ENCODE measurements at regions of chr5 and their contacts with region 1.

Region 1: GRCh38 chr5:65481635-65482295 is at the start of gene ADAMTS6:
- DNase-seq: peak; percentile 92
- ATAC-seq: peak; percentile 94
- H3K4me3 Mint-ChIP-seq: no peak within 1 kb of the TSS
- H3K27ac Mint-ChIP-seq: peak within 1 kb of the TSS; percentile 85
- H3K4me1 Mint-ChIP-seq: peaks cover 7% of the 10 kb centered on the region
- H3K27me3 Mint-ChIP-seq: no peaks in the 10 kb centered on the region
- CTCF ChIP-seq: no peak
- total RNA-seq, gene ADAMTS6: 1.1 to 1.9 TPM

Region 2: GRCh38 chr5:64634997-64635686 is 846.6 kb before region 1 on chr5:
- CTCF ChIA-PET with region 1: interaction called, 14 read pairs
- POLR2A ChIA-PET with region 1: no interaction called
- intact Hi-C with region 1: loop called (anchors 10 kb)
- DNase-seq: no peak
- ATAC-seq: peak; percentile 45
- H3K4me3 Mint-ChIP-seq: no peak overlapping the region
- H3K27ac Mint-ChIP-seq: no peak overlapping the region
- H3K4me1 Mint-ChIP-seq: peaks cover 2% of the 10 kb centered on the region
- H3K27me3 Mint-ChIP-seq: peaks cover 20% of the 10 kb centered on the region
- CTCF ChIP-seq: peak; percentile 91

Region 3: DNA sequence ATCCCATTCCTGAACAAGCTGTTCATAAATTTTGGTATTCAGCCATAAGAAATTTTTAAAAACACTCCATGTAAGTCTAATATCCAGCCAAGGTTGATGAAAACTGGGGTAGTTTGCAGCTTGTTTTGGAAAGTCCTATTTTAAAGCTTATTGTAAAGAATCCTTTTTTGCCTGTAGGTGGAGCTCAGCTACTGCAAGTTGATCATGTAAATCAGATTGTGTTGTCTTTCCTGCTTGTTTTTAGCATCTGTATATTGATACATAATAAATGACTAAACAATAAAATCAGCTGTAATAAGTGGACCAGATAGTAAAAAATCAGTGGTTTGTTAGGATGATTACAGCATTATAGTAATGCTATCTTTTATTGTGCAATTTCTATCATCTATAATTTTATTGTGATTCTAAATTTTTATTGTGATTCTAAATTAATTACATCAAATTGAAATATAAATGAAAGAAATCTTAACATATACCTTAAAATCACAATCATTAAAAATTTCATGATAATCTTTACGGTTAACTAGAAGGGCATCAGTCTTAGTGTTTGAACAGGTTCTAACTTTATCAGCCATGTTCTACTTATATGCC is 670.6 kb before region 1 on chr5:
- CTCF ChIA-PET with region 1: interaction called, 45 read pairs
- POLR2A ChIA-PET with region 1: no interaction called
- intact Hi-C with region 1: loop called (anchors 1 kb)
- DNase-seq: peak; percentile 18
- ATAC-seq: peak; percentile 37
- H3K4me3 Mint-ChIP-seq: no peak overlapping the region
- H3K27ac Mint-ChIP-seq: no peak overlapping the region
- H3K4me1 Mint-ChIP-seq: peaks cover 5% of the 10 kb centered on the region
- H3K27me3 Mint-ChIP-seq: no peaks in the 10 kb centered on the region
- CTCF ChIP-seq: peak; percentile 69

Region 4: DNA sequence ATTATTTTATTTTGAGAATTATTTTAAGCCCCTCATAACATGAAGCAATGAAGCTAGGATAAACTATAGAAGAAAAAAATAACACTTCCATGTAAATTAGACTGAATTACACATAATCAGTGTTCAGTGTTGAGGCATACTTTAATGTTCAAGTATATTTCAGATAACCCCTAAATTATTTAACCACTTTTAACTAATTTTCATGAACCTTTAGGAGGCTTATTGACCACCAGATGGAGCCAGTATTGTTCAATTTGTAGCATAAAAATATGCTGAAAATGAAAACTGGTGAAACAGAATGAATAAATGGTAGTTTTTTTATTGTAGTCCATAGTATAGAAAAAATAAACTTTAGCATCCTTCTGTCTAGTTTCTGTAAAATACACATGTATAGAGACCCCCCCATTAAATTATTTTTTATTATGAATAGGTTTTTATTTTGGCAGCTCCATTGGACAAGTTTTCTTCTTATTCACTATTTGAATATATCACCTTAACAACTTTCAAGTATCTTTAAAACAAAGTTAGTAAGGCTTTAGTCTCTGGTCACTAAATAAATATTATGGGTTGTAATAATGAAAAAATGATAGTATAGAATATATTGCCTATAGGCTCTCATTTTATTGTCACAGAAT is 522.9 kb before region 1 on chr5:
- CTCF ChIA-PET with region 1: interaction called, 15 read pairs
- POLR2A ChIA-PET with region 1: no interaction called
- intact Hi-C with region 1: loop called (anchors 5 kb)
- DNase-seq: no peak
- ATAC-seq: no peak
- H3K4me3 Mint-ChIP-seq: no peak overlapping the region
- H3K27ac Mint-ChIP-seq: no peak overlapping the region
- H3K4me1 Mint-ChIP-seq: no peaks in the 10 kb centered on the region
- H3K27me3 Mint-ChIP-seq: no peaks in the 10 kb centered on the region
- CTCF ChIP-seq: peak; percentile 51

Region 5: DNA sequence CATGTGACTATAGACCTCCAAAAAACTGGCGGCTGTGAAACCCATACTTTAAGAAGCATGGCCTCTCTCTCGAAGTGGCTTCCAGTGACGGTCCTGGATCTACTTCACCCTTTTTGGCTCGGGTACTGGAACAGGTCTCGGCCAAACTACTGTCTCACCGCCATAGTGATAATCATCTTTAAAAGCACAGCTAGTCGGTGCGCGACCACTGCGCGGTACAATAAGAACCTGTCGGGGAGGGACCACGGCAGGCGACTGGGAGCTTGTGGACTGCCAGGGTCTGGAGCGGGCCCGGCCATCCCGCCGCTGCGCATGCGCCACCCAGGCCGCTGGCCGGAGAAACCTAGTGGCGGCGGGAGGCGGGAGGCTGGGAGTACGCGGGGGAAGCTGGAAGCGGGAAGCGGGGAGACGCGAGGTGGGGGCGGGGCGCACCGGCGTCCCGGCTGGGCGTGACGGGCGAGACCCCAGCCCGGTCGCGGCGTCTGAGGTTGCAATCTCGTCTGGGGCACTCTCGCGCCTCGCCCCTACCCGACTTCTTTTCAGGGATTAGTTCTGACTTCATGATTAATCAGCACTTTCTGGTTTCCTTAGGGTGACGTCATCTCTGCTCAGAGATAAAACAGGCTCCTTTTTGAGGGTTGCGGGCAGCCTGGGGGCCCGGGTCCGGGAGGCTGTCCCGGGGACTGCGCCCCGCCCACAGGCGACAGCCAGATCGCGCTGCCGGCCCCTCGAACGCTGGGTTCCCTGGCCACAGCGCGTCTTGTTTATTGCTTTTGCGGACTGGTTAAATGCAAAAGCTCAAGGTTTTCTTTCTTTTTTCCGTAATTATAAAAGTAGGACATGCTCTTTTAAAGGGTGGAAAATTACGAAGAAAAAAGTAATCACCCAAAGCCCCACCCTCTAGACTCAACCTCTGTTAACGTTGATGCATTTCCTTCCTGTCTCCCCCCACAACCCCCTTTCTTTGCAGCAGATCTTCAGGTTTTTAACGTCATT is 446.3 kb before region 1 on chr5:
- CTCF ChIA-PET with region 1: interaction called, 10 read pairs
- POLR2A ChIA-PET with region 1: no interaction called
- intact Hi-C with region 1: no loop called
- DNase-seq: peak; percentile 88
- ATAC-seq: peak; percentile 88
- H3K4me3 Mint-ChIP-seq: peak overlapping the region; percentile 68
- H3K27ac Mint-ChIP-seq: peak overlapping the region; percentile 93
- H3K4me1 Mint-ChIP-seq: peaks cover 28% of the 10 kb centered on the region
- H3K27me3 Mint-ChIP-seq: no peaks in the 10 kb centered on the region
- CTCF ChIP-seq: no peak

Region 6: GRCh38 chr5:65076251-65076869 is 405.4 kb before region 1 on chr5:
- CTCF ChIA-PET with region 1: interaction called, 15 read pairs
- POLR2A ChIA-PET with region 1: interaction called, 3 read pairs
- intact Hi-C with region 1: loop called (anchors 2 kb)
- DNase-seq: peak; percentile 90
- ATAC-seq: peak; percentile 99
- H3K4me3 Mint-ChIP-seq: no peak overlapping the region
- H3K27ac Mint-ChIP-seq: no peak overlapping the region
- H3K4me1 Mint-ChIP-seq: peaks cover 10% of the 10 kb centered on the region
- H3K27me3 Mint-ChIP-seq: peaks cover 2% of the 10 kb centered on the region
- CTCF ChIP-seq: peak; percentile 21

Region 7: GRCh38 chr5:65102828-65103711 is 378.7 kb before region 1 on chr5:
- CTCF ChIA-PET with region 1: interaction called, 39 read pairs
- POLR2A ChIA-PET with region 1: interaction called, 7 read pairs
- intact Hi-C with region 1: loop called (anchors 5 kb)
- DNase-seq: peak; percentile 49
- ATAC-seq: peak; percentile 78
- H3K4me3 Mint-ChIP-seq: peak overlapping the region; percentile 72
- H3K27ac Mint-ChIP-seq: peak overlapping the region; percentile 87
- H3K4me1 Mint-ChIP-seq: peaks cover 44% of the 10 kb centered on the region
- H3K27me3 Mint-ChIP-seq: no peaks in the 10 kb centered on the region
- CTCF ChIP-seq: no peak